ENCODE measurements at regions of chr16 and their contacts with region 1.

Region 1: DNA sequence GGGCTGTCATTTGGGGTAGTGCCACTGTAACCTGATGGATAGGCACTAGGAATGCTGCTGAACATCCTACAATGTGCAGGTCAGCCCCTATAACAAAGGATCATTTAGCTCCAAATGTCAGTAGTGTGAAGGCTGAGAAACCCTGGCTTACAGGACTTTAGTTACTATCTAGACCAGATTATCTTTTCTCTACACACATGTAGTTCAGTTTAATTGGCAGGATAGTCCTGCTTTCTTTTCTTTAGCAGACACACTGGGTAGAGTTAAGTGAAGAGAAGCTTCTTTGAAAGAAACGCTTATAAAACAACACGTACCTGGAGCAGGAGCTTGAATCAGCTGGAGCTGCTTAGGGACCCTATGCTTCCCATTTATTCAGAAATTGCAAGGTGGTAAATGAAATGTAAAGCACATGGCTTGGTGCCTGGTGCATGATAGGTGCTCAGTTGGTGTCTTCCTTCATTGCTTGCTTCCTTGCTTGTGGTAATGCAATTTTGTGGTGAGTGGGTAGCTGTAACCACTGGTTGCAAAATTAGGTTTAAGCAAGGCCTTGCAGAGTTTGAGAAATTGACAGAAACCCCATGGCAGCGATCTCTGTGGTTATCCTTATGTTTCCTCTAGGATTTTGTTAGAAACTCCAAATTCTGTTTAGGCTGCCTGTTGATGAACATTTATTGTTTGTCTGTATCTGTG is 9.4 kb downstream of the METTL9 start:
- H3K4me3 Mint-ChIP-seq: no peak overlapping the region
- H3K27ac Mint-ChIP-seq: peak overlapping the region; percentile 50
- H3K4me1 Mint-ChIP-seq: peaks cover 82% of the 10 kb centered on the region
- H3K27me3 Mint-ChIP-seq: no peaks in the 10 kb centered on the region

Region 2: DNA sequence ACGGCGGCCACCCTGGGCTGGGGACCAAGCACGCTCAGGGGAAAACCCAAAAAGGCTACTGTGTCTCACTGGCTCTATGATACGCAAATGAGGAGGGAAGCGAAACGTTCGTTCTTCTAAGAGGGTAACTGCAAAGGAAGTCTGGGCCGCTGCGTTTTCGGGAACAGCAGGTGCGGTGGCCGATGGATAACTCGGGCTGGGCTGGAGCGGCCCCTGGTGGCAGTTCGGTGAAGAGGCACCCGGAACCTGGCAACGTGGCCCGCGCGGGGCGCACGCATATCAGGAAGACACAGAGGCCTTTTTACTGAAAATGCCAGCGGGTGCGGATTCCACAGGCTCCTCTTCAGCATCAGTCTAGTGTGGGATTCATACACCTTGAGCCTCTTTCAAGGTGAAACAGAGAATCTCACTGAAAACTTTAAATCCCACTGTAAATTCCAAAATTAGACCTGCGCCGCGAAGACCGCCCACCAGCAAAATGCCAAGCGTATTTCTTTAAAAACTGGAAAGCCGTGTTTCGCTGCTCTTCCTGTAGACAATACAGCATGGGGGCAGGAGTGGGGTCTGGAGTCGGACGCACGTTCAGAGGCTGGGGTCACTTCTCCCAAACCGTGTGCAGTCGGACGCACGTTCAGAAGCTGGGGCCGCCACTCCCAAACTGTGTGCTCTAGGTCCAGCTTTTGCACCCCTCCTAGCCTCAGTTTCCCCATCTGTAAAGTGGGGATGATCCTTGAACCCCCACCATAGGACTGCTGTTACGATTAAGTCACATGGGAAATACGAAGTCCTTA is 53.8 kb before region 1 on chr16:
- intact Hi-C with region 1: no loop called
- H3K4me3 Mint-ChIP-seq: peak overlapping the region; percentile 50
- H3K27ac Mint-ChIP-seq: peak overlapping the region; percentile 48
- H3K4me1 Mint-ChIP-seq: peaks cover 22% of the 10 kb centered on the region
- H3K27me3 Mint-ChIP-seq: peaks cover 17% of the 10 kb centered on the region

Region 3: DNA sequence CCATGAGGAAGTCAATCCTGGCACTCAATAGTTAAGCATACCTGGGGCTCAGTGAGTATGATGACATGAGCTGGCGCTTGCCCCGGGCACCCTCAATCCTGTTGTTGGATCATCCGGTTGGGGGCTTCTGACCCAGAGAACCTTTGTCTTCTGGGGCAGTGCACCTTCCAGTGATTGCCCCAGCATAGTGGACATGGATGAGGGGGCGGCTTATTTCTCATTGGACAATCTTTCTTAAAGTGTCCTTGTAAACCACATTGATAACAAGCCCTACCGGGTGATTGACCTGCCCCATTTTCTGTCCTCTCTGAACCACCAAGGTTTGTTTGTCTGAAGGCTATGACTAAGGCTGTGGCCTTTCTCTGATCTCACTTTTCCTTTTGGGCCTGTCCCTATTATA is 25.4 kb after region 1 on chr16:
- intact Hi-C with region 1: no loop called
- H3K4me3 Mint-ChIP-seq: no peak overlapping the region
- H3K27ac Mint-ChIP-seq: no peak overlapping the region
- H3K4me1 Mint-ChIP-seq: peaks cover 55% of the 10 kb centered on the region
- H3K27me3 Mint-ChIP-seq: no peaks in the 10 kb centered on the region

Region 4: DNA sequence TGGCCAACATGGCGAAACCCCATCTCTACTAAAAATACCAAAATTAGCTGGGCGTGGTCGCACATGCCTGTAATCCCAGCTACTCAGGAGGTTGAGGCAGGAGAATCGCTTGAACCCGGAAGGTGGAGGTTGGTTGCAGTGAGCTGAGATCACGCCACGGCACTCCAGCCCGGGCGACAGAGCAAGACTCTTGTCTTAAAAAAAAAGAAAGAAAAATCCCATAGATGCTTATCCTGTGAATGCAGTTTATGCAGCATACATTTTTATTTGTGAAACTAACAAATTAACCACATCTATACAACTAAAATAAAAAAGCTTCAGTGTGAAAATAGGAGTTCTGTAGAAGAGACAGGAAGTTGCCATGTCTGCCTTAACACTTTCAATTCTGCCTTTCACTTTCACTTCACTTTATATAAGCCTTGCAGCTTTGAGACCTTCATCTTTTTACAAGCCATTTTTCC is 36.5 kb after region 1 on chr16:
- intact Hi-C with region 1: loop called (anchors 5 kb)
- H3K4me3 Mint-ChIP-seq: peak overlapping the region; percentile 68
- H3K27ac Mint-ChIP-seq: peak overlapping the region; percentile 85
- H3K4me1 Mint-ChIP-seq: peaks cover 57% of the 10 kb centered on the region
- H3K27me3 Mint-ChIP-seq: no peaks in the 10 kb centered on the region

Region 5: GRCh38 chr16:21937336-21937829 is 328.6 kb after region 1 on chr16:
- intact Hi-C with region 1: no loop called
- H3K4me3 Mint-ChIP-seq: no peak overlapping the region
- H3K27ac Mint-ChIP-seq: no peak overlapping the region
- H3K4me1 Mint-ChIP-seq: peaks cover 19% of the 10 kb centered on the region
- H3K27me3 Mint-ChIP-seq: peaks cover 4% of the 10 kb centered on the region

Region 6: DNA sequence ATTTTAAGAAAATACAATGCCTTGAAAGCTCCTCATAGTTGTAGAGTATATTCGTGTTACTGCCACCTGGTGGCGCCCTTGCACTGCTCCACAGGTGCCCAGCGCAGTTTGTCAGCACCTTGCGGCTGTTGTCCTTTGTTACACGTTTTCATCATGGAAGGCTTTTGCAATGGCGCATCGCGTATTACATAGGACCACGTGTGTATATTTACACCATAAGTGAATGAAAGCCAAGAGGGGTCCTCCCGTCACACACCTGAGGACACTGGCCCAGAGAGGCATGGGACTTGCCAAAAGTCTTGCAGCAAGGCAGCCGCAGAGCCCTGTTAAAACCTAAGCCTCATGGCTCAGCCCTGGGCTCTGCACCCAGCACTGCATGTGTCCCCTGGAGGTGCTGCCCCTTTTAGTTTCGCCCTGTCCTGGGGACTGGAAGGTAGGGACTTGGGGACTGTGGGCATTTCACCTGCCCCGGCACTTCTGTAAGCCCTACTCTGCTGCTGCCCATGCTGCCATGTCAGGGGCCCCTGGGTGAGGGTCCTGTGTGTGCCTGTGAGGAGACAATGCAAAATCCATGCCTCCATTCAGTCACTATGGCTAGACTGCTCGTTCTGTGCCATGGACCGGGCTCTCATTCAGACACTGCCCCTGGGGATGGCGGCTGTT is 712.7 kb after region 1 on chr16:
- intact Hi-C with region 1: no loop called
- H3K4me3 Mint-ChIP-seq: no peak overlapping the region
- H3K27ac Mint-ChIP-seq: no peak overlapping the region
- H3K4me1 Mint-ChIP-seq: peaks cover 9% of the 10 kb centered on the region
- H3K27me3 Mint-ChIP-seq: no peaks in the 10 kb centered on the region